Esophagus muscularis mucosa (tissue), 4 donors: ENCODE measurements at regions of chr18 and their contacts with region 1.

Region 1: GRCh38 chr18:7575157-7576028 is 8.3 kb downstream of the PTPRM start:
- DNase-seq: no peak
- H3K4me3 ChIP-seq: no peak overlapping the region
- H3K27ac ChIP-seq: no peak overlapping the region
- H3K4me1 ChIP-seq: peaks cover 34 to 64% (median 52%) of the 10 kb centered on the region in 4 donors
- H3K27me3 ChIP-seq: no peaks in the 10 kb centered on the region
- CTCF ChIP-seq: no peak
- EP300 ChIP-seq: no peak
- POLR2A ChIP-seq: no peak

Region 2: DNA sequence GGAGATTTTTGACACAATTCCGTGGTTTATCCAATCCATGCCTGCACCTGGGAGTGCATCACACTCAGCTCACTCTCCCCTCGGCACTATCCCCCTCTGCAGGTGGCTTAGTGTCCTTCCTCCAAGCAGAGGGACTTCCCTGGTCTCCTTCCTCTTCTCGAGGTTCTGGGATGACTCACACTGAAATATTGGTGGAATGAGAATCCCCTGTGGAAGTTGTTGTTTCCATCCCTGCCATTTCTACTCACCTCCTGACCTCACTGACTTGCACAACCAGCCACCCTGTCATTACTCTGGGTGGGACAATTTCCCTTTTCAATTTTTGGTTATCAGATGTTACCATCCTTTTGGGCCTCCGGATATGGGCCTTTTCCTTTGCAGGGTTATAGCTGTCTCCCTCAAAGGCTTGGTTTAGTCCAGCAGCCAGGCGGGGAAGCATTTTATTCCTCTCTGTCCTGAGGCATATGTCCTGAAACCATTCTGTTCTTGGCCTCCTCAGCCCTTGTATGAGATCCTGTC is 51.6 kb after region 1 on chr18:
- intact Hi-C with region 1: loop called (anchors 10 kb)
- DNase-seq: peak; percentile 68
- H3K4me3 ChIP-seq: no peak overlapping the region
- H3K27ac ChIP-seq: peak overlapping the region in 1 of 4 donors; percentile 31
- H3K4me1 ChIP-seq: peaks cover 32 to 53% (median 46%) of the 10 kb centered on the region in 4 donors
- H3K27me3 ChIP-seq: no peaks in the 10 kb centered on the region
- CTCF ChIP-seq: peak in 1 of 3 experiments; percentile 21
- EP300 ChIP-seq: no peak
- POLR2A ChIP-seq: no peak

Region 3: GRCh38 chr18:7749510-7749981 is 174.2 kb after region 1 on chr18:
- intact Hi-C with region 1: loop called (anchors 10 kb)
- DNase-seq: no peak
- H3K4me3 ChIP-seq: no peak overlapping the region
- H3K27ac ChIP-seq: peak overlapping the region in 1 of 4 donors; percentile 22
- H3K4me1 ChIP-seq: peaks cover 48 to 60% (median 49%) of the 10 kb centered on the region in 4 donors
- H3K27me3 ChIP-seq: no peaks in the 10 kb centered on the region
- CTCF ChIP-seq: no peak
- EP300 ChIP-seq: no peak
- POLR2A ChIP-seq: no peak

Region 4: GRCh38 chr18:7766346-7766745 is 191.0 kb after region 1 on chr18:
- intact Hi-C with region 1: no loop called
- DNase-seq: no peak
- H3K4me3 ChIP-seq: no peak overlapping the region
- H3K27ac ChIP-seq: no peak overlapping the region
- H3K4me1 ChIP-seq: peaks cover 10 to 35% (median 20%) of the 10 kb centered on the region in 4 donors
- H3K27me3 ChIP-seq: no peaks in the 10 kb centered on the region
- CTCF ChIP-seq: no peak
- EP300 ChIP-seq: no peak
- POLR2A ChIP-seq: no peak

Region 5: GRCh38 chr18:8389391-8390340 is 814.3 kb after region 1 on chr18:
- intact Hi-C with region 1: loop called (anchors 10 kb)
- DNase-seq: no peak
- H3K4me3 ChIP-seq: no peak overlapping the region
- H3K27ac ChIP-seq: no peak overlapping the region
- H3K4me1 ChIP-seq: no peaks in the 10 kb centered on the region
- H3K27me3 ChIP-seq: no peaks in the 10 kb centered on the region
- CTCF ChIP-seq: peak; percentile 62 to 73 (median 66)
- EP300 ChIP-seq: no peak
- POLR2A ChIP-seq: no peak

Region 6: DNA sequence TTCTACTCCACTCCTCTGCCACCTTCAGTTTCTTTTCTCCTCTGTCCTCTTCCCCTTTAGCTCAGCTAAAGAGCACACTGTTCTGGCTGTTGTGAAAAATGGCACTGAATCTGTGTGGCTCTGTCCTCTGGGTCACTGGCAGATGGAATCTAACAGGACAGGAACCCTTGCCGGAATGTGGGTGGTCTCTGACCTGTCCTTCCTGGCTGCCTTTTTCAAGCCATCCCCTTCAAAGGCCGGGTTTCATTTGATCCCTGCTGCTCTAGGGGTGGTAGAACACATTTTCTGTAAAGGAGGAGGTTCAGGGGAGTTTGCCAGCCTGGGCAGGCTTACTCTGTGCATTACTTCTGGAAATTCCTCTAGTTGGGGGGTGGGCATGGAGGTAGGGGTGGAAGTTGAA is 1159.9 kb after region 1 on chr18:
- intact Hi-C with region 1: no loop called
- DNase-seq: no peak
- H3K4me3 ChIP-seq: no peak overlapping the region
- H3K27ac ChIP-seq: no peak overlapping the region
- H3K4me1 ChIP-seq: peaks cover 6 to 18% (median 8%) of the 10 kb centered on the region in 4 donors
- H3K27me3 ChIP-seq: no peaks in the 10 kb centered on the region
- CTCF ChIP-seq: no peak
- EP300 ChIP-seq: no peak
- POLR2A ChIP-seq: no peak